ENCODE measurements at regions of chr1 and their contacts with region 1.

Region 1: DNA sequence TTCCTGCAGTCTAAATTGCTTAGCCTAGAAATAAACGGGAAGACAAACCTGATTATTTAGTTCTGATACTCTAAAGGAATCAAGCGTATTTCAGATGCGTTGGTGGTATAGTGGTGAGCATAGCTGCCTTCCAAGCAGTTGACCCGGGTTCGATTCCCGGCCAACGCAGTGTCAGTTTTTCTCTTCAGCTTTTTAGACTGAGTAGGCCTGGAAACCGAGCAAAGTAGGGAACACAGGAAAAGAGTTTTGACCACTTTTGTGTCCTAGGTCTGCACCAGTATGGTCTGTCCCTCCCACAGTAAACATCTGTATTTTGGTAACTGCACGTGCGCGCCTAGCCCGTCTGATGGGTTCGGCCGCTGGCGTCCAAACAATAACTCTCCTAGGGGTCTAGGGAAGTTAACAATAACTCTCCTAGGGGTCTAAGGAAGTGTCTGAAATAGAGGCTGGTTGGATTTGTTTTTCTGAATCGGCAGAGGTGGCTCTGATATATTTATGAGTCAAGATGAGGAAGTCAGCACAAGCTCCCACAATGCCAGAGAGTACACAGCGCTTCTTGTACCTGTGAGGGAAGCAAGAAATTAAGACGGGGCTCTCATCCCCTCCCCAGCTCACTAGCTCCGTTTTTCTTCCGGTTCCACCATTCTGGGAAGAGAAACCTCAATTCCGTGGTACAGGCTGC is 15.6 kb upstream of the HJV start:
- DNase-seq: peak; percentile 64 to 89
- ATAC-seq: peak; percentile 55 to 66
- H3K4me3 ChIP-seq: peak overlapping the region; percentile 62
- H3K27ac ChIP-seq: peak overlapping the region; percentile 91 to 95
- H3K4me1 ChIP-seq: peaks cover 6% of the 10 kb centered on the region; the same call in 2 of the 3 replicates
- CTCF ChIP-seq: no peak
- EP300 ChIP-seq: no peak
- POLR2A ChIP-seq: no peak
- RAD21 ChIP-seq: no peak

Region 2: DNA sequence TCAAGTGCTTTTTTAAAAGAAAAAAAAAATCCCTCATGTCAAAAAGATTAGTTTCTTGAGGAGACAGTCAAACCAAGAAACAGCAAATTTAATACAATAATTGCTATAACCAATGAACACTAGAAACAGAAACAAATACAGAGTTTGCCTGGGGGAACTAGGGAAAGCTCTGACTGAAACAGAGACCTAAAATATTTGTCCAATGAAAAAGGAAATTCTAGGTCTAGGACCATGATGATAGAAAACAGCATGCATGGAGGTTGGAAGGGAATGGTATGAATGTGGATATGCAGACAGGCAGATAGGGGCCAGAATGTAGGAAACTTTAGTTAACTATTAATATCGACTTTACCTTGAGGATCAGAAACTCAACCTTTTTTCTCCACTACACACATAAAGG is 244.6 kb before region 1 on chr1:
- CTCF ChIA-PET with region 1: no interaction called
- POLR2A ChIA-PET with region 1: no interaction called
- DNase-seq: no peak
- ATAC-seq: no peak
- H3K4me3 ChIP-seq: no peak overlapping the region
- H3K27ac ChIP-seq: no peak overlapping the region
- H3K4me1 ChIP-seq: no peaks in the 10 kb centered on the region
- CTCF ChIP-seq: no peak
- EP300 ChIP-seq: no peak
- POLR2A ChIP-seq: no peak
- RAD21 ChIP-seq: no peak

Region 3: DNA sequence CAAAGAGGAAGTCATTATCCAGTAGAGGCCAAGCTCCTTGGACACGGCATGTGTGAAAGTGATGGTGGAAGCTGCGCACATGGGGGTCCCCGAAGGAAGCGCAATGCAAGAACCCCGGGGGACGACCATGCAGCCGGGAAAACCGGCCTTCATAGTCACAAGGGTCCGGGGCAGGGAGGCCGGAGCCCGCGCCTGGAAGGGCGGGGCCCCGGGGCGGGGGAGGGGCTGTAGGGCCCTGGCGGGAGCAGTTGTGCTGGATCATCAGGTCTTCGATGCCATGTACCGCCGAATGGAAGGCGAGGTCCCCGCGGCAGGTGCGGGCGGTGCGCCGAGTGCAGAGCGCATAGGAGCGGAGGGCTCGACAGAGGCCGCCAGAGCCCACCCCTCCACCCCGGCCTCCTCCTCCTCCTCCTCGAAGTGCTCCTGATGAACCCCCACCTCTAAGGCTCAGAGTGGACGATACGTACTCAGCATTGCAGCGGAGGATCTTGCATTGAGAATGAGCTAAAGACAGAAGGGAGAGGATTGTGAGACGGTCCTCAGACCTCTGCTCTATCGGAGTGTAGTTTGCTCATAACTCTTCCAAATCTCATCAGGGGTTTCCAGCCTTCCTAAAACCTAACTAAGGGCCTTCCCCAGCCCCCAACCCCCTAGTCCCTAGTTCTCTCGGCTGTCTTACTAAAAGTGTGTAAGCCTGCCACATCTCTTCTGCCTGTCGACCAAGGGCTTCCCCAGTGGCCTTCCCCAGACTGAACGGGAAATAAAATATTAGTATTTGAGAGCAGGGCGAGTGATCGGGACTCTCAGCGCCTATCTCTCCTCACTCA is 17.7 kb before region 1 on chr1:
- CTCF ChIA-PET with region 1: interaction called, 28 read pairs
- POLR2A ChIA-PET with region 1: no interaction called
- DNase-seq: no peak
- ATAC-seq: no peak
- H3K4me3 ChIP-seq: no peak overlapping the region
- H3K27ac ChIP-seq: no peak overlapping the region
- H3K4me1 ChIP-seq: peaks cover 14% of the 10 kb centered on the region
- CTCF ChIP-seq: no peak
- EP300 ChIP-seq: no peak
- POLR2A ChIP-seq: no peak
- RAD21 ChIP-seq: no peak

Region 4: GRCh38 chr1:146049436-146049835 is 12.3 kb after region 1 on chr1:
- CTCF ChIA-PET with region 1: interaction called, 41 read pairs
- POLR2A ChIA-PET with region 1: interaction called, 106 read pairs
- DNase-seq: no peak
- ATAC-seq: no peak
- H3K4me3 ChIP-seq: no peak overlapping the region
- H3K27ac ChIP-seq: peak overlapping the region; percentile 81 to 95
- H3K4me1 ChIP-seq: peaks cover 29% of the 10 kb centered on the region
- CTCF ChIP-seq: no peak
- EP300 ChIP-seq: no peak
- POLR2A ChIP-seq: no peak
- RAD21 ChIP-seq: no peak

Measured in A549 (cell line).